Activated CD4-positive, alpha-beta T cell treated with anti-CD3 and anti-CD28 coated beads for 36 hours (primary cell): ENCODE measurements at regions of chr11 and their contacts with region 1.

Region 1: DNA sequence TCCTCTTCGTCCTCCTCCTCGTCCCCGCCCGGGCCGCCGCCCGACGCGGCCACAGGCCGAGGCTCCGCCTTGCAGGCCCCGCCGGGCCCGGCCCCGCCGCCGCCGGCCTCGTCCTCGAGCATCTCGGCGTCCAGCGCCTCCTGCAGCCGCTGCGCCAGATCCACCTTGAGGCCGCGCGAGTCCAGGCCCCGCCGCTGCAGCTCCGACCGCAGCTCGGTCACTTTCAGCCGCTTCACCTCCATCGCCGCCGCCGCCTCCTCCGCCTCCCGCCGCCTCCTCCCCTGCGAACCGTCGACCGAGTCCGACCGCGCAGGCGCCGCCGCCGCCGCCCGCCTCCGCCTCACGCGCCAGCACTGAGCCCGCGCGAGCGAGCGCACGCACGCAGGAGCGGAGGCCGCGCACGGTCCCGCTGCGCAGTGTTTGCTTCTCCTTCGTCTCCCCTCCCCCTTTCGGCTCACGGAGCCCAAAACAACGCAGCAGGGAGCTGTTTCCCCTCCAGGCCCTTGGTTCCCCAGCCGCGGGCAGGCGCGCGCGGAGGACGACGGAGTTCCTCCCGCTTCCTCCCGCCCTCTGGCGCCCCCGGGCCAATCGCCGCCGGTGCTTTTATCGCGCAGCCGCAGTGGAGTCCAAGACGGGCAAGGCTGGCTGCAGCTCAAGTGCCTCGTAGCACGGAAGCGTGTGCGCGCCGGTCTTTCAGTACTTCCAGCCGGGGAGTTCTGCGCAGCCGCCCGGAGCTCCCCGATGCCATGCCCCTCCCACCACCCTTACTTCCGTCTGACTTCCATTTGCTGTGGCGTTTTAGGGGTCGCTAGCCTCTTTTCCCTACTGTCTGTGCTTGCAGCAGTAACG is at the start of gene HNRNPUL2:
- DNase-seq: peak; percentile 99
- ATAC-seq: peak; percentile 89
- H3K4me3 Mint-ChIP-seq: peak within 1 kb of the TSS; percentile 87
- H3K27ac Mint-ChIP-seq: peak within 1 kb of the TSS; percentile 97
- H3K4me1 Mint-ChIP-seq: peaks cover 41% of the 10 kb centered on the region
- H3K27me3 Mint-ChIP-seq: no peaks in the 10 kb centered on the region
- total RNA-seq, gene HNRNPUL2: 48.7 to 59.6 TPM

Region 2: GRCh38 chr11:61639816-61640443 is 1087.2 kb before region 1 on chr11:
- CTCF ChIA-PET with region 1: no interaction called
- POLR2A ChIA-PET with region 1: no interaction called
- intact Hi-C with region 1: no loop called
- DNase-seq: peak; percentile 15
- ATAC-seq: no peak
- H3K4me3 Mint-ChIP-seq: no peak overlapping the region
- H3K27ac Mint-ChIP-seq: no peak overlapping the region
- H3K4me1 Mint-ChIP-seq: no peaks in the 10 kb centered on the region
- H3K27me3 Mint-ChIP-seq: no peaks in the 10 kb centered on the region

Region 3: DNA sequence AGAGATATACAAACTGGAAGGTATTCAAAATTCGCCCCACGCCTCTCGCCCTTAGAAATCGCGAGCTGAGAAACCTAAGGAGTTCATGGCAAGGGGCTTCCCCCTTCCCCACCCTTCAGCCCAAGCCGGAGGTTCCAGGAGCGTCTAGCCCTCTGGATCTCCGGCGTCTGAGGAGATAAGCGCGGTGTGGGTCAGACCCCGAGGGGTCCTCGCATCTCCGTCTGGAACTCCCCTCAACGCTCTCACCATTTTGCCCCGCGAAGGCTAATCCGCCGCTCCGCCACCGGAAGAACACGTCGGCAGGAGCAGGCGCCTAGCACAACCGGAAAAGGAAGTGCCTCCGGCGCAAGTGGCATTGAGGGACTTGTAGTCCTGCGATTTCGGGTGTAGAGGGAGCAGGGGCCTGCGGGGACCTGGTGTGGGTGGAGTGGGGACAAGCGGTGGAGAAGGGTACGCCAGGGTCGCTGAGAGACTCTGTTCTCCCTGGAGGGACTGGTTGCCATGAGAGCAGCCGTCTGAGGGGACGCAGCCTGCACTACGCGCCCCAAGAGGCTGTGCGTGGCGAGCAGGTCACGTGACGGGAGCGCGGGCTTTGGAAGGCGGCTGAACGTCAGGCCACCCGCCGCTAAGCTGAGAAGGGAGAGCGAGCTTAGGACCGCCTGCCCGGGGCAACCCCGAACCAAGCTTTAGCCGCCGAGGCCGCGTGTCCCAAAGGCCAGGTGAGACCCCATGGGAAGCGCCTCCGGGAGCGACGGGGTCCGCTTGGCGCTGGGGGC is 934.6 kb before region 1 on chr11 and contains the starts of genes FEN1 and TMEM258:
- CTCF ChIA-PET with region 1: no interaction called
- POLR2A ChIA-PET with region 1: no interaction called
- intact Hi-C with region 1: loop called in 1 of 2 experiments (anchors 5 kb)
- DNase-seq: peak; percentile 94
- ATAC-seq: peak; percentile 88
- H3K4me3 Mint-ChIP-seq: peak within 1 kb of the TSS; percentile 92
- H3K27ac Mint-ChIP-seq: peak within 1 kb of the TSS; percentile 98
- H3K4me1 Mint-ChIP-seq: peaks cover 44% of the 10 kb centered on the region
- H3K27me3 Mint-ChIP-seq: no peaks in the 10 kb centered on the region
- total RNA-seq, gene FEN1: 70.0 to 108 TPM
- total RNA-seq, gene TMEM258: 172 to 176 TPM

Region 4: DNA sequence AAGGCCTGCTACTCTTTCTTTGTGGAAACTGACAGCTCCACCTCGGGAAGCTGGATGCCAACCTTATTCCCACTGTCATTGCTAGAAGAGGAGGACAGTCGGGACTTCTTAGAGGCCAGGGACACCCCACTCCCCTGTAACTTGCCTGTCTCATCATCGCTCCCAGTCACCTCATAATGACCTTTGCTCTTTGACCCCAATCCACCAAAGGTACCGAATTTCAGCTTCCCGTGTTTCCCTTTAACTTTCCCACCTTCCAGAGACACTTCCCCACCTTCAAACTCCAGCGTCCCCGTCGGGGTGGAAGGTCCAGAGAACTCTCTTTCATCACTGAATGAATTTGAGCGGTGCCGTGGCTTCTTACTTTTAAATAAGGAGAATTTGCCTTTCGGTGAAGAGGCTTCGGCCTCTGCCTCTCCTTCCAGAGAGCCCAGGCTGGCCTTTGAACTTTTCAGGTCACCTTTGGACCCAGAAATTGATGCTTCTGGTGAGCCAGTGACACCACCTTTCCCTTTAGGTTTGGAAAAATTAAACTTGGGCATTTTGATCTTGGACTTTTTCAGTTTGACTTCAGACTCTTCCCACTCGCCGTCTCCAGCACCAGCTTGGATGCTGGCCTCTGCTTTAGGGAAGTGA is 210.3 kb before region 1 on chr11:
- CTCF ChIA-PET with region 1: no interaction called
- POLR2A ChIA-PET with region 1: no interaction called
- intact Hi-C with region 1: no loop called
- DNase-seq: no peak
- ATAC-seq: no peak
- H3K4me3 Mint-ChIP-seq: no peak overlapping the region
- H3K27ac Mint-ChIP-seq: no peak overlapping the region
- H3K4me1 Mint-ChIP-seq: no peaks in the 10 kb centered on the region
- H3K27me3 Mint-ChIP-seq: no peaks in the 10 kb centered on the region

Region 5: DNA sequence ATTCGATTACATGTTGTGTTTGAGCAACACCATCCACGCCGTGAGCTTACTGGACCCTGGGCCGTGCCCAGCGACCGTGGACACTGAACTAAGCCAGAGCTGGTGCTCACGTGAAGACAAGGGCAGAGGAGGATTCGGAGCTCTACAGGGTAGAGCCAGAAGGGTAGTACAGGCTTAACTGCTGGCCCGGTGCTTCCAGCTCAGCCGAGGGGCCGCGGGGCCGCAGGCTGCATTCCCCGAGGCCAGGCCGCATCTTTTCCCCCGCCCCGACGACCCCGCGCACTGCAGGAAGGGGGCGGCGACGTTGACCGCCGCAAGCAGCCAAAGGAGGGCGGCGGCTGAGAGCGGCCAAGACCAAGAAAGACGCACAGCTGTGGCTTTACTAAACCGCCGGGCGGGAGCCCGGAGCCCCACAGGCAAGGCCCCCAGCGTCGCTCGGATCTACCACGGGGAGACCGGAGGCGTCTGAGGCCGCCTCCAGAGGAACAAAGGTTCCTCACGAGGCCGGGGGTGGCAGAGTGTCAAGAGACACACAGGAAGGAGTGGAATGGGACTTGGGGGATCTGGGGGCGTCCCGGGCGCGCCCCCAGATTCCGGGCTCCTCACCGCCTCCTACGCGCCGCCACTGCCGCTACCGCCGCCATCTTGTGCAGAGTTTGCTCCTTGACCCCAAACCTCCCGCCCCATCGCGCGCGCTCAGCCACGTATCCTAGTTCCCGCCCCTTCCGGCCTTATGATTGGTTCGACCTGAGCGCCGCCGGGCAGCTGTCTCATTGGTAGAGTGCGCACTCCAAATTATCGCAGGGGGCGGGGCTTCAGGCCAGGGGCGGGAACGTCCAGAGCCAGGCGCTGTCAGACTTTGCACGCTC is 80.9 kb before region 1 on chr11 and contains the start of gene GANAB:
- CTCF ChIA-PET with region 1: interaction called, 3 read pairs
- POLR2A ChIA-PET with region 1: interaction called, 11 read pairs
- intact Hi-C with region 1: loop called in 1 of 2 experiments (anchors 1 kb)
- DNase-seq: peak; percentile 100
- ATAC-seq: peak; percentile 99
- H3K4me3 Mint-ChIP-seq: peak within 1 kb of the TSS; percentile 93
- H3K27ac Mint-ChIP-seq: peak within 1 kb of the TSS; percentile 93
- H3K4me1 Mint-ChIP-seq: peaks cover 34% of the 10 kb centered on the region
- H3K27me3 Mint-ChIP-seq: no peaks in the 10 kb centered on the region
- total RNA-seq, gene GANAB: 208 to 218 TPM

Region 6: GRCh38 chr11:62705880-62706849 is 21.0 kb before region 1 on chr11:
- CTCF ChIA-PET with region 1: interaction called, 8 read pairs
- POLR2A ChIA-PET with region 1: interaction called, 3 read pairs
- intact Hi-C with region 1: loop called (anchors 1 kb)
- DNase-seq: peak; percentile 98
- ATAC-seq: peak; percentile 72
- H3K4me3 Mint-ChIP-seq: peak overlapping the region; percentile 82
- H3K27ac Mint-ChIP-seq: peak overlapping the region; percentile 51
- H3K4me1 Mint-ChIP-seq: peaks cover 46% of the 10 kb centered on the region
- H3K27me3 Mint-ChIP-seq: no peaks in the 10 kb centered on the region

Region 7: GRCh38 chr11:62805076-62805892 is 78.1 kb after region 1 on chr11 and contains the start of gene NXF1:
- CTCF ChIA-PET with region 1: interaction called, 3 read pairs
- POLR2A ChIA-PET with region 1: no interaction called
- intact Hi-C with region 1: loop called in 1 of 2 experiments (anchors 1 kb)
- DNase-seq: peak; percentile 97
- ATAC-seq: peak; percentile 79
- H3K4me3 Mint-ChIP-seq: peak within 1 kb of the TSS; percentile 99
- H3K27ac Mint-ChIP-seq: peak within 1 kb of the TSS; percentile 97
- H3K4me1 Mint-ChIP-seq: peaks cover 29% of the 10 kb centered on the region
- H3K27me3 Mint-ChIP-seq: no peaks in the 10 kb centered on the region
- total RNA-seq, gene NXF1: 89.5 to 97.6 TPM

Region 8: DNA sequence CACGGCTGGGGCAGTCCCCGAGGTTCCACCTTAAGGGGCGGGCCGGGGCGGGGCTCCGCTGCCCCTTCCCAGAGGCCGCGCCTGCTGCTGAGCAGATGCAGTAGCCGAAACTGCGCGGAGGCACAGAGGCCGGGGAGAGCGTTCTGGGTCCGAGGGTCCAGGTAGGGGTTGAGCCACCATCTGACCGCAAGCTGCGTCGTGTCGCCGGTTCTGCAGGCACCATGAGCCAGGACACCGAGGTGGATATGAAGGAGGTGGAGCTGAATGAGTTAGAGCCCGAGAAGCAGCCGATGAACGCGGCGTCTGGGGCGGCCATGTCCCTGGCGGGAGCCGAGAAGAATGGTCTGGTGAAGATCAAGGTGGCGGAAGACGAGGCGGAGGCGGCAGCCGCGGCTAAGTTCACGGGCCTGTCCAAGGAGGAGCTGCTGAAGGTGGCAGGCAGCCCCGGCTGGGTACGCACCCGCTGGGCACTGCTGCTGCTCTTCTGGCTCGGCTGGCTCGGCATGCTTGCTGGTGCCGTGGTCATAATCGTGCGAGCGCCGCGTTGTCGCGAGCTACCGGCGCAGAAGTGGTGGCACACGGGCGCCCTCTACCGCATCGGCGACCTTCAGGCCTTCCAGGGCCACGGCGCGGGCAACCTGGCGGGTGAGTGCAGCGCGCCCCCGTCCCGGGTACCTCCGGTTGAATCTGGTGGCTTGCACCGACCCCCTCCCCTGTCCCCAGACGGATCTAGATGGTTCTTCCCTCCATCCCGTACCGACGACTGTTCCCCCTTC is 153.9 kb after region 1 on chr11 and contains the start of gene SLC3A2:
- CTCF ChIA-PET with region 1: interaction called, 3 read pairs
- POLR2A ChIA-PET with region 1: interaction called, 7 read pairs
- intact Hi-C with region 1: loop called (anchors 1 kb)
- DNase-seq: peak; percentile 94
- ATAC-seq: peak; percentile 75
- H3K4me3 Mint-ChIP-seq: peak within 1 kb of the TSS; percentile 99
- H3K27ac Mint-ChIP-seq: peak within 1 kb of the TSS; percentile 100
- H3K4me1 Mint-ChIP-seq: peaks cover 44% of the 10 kb centered on the region
- H3K27me3 Mint-ChIP-seq: no peaks in the 10 kb centered on the region
- total RNA-seq, gene SLC3A2: 401 to 402 TPM

Region 9: GRCh38 chr11:62922658-62923431 is 195.7 kb after region 1 on chr11:
- CTCF ChIA-PET with region 1: no interaction called
- POLR2A ChIA-PET with region 1: no interaction called
- intact Hi-C with region 1: no loop called
- DNase-seq: peak; percentile 83
- ATAC-seq: peak; percentile 68
- H3K4me3 Mint-ChIP-seq: peak overlapping the region; percentile 59
- H3K27ac Mint-ChIP-seq: peak overlapping the region; percentile 7
- H3K4me1 Mint-ChIP-seq: peaks cover 32% of the 10 kb centered on the region
- H3K27me3 Mint-ChIP-seq: peaks cover 57% of the 10 kb centered on the region